GM18951 (cell line): ENCODE measurements at regions of chr2 and their contacts with region 1.

Region 1: DNA sequence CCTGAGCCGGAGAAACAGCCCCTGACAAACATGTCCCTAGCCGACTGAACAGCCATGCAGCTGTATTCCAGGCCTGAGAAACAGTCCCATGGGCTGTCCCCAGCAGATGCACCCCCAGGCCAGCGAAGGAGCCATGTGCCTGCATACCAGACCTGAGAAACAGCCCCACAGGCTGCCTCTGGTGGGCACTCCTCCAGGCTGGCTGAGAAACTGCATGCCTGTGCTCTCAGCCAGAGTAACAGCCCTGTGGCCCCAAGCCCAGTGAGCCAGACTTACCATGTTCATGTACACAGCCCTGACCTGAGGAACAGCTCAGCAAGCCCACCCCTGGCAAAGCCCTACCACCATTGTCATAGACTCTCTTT is 24.8 kb downstream of the BOLL start:
- POLR2A ChIP-seq: no peak

Region 2: GRCh38 chr2:197137231-197137630 is 623.0 kb before region 1 on chr2:
- in situ Hi-C with region 1: no loop called
- POLR2A ChIP-seq: no peak

Region 3: GRCh38 chr2:197399887-197400540 is 360.3 kb before region 1 on chr2:
- in situ Hi-C with region 1: loop called (anchors 25 kb)
- POLR2A ChIP-seq: no peak